Activated B cell treated with CpG ODN at 0.5 μM for 24 hours (primary cell): ENCODE measurements at regions of chr20 and their contacts with region 1.

Region 1: DNA sequence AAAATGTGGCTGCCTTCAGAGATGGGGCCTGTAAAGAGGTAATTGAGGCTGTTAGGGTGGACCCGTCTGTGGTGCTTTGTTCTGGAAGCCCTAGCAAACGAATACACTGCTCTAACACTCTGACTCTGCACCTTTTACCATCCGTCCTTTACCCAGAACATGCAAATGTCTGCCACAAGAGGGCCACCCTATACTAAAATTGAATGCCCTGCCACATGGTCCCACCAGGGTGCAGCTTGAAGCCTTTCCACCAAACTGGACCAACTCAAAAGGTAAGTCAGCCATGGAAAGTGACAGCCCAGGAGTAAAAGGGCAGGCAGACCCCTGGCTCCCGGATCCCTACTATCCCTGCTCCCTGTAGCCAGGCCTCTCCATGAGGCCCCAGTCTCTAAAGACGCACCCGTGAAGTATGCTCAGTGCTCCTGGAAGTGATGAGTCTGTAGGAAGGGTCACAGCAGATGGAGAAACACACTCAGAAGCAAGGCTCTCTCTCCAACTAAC is 5.8 kb upstream of the BFSP1 start:
- DNase-seq: peak; percentile 30
- ATAC-seq: peak; percentile 92
- H3K4me3 Mint-ChIP-seq: no peak overlapping the region
- H3K27ac Mint-ChIP-seq: no peak overlapping the region
- H3K4me1 Mint-ChIP-seq: peaks cover 5% of the 10 kb centered on the region
- H3K27me3 Mint-ChIP-seq: peaks cover 26% of the 10 kb centered on the region
- CTCF ChIP-seq: no peak

Region 2: DNA sequence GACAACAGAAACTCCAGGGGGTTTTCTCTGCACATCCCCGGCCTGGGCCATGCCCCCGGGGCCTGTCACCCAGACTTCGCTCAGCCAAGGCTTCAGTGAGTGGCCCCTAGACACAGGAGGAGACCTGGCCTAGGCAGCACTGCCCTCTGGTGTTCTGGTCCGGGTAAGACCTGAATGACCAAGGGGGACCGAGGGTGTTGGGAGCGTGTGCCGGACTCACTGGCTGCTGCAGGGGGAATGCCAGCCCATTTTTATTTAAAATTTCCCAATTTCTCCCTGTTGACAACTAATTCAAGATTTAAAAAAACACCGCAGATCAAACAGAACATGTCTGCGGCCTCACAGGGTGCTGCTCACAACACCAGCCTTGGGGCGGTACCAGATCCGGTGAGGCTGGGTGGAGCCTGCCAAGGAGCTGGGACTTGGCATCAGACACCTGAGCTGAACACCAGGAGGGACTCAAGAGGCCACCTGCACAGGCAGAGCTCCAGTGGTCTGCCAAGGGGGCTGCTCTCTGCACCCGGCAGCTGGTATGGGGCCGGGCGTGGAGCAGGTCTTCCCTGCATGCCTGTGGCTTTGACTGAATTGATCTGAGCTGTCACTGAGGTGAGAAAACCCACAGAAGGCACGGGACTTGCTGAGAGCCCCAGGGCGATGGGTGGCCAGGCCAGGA is 80.7 kb after region 1 on chr20:
- CTCF ChIA-PET with region 1: interaction called, 13 read pairs
- POLR2A ChIA-PET with region 1: no interaction called
- intact Hi-C with region 1: loop called (anchors 1 kb)
- DNase-seq: peak; percentile 20
- ATAC-seq: peak; percentile 70
- H3K4me3 Mint-ChIP-seq: no peak overlapping the region
- H3K27ac Mint-ChIP-seq: no peak overlapping the region
- H3K4me1 Mint-ChIP-seq: peaks cover 2% of the 10 kb centered on the region
- H3K27me3 Mint-ChIP-seq: no peaks in the 10 kb centered on the region
- CTCF ChIP-seq: no peak

Region 3: GRCh38 chr20:17898548-17898994 is 361.6 kb after region 1 on chr20:
- CTCF ChIA-PET with region 1: interaction called, 10 read pairs
- POLR2A ChIA-PET with region 1: no interaction called
- intact Hi-C with region 1: loop called (anchors 1 kb)
- DNase-seq: no peak
- ATAC-seq: peak; percentile 78
- H3K4me3 Mint-ChIP-seq: no peak overlapping the region
- H3K27ac Mint-ChIP-seq: no peak overlapping the region
- H3K4me1 Mint-ChIP-seq: peaks cover 53% of the 10 kb centered on the region
- H3K27me3 Mint-ChIP-seq: peaks cover 16% of the 10 kb centered on the region
- CTCF ChIP-seq: peak; percentile 93

Region 4: DNA sequence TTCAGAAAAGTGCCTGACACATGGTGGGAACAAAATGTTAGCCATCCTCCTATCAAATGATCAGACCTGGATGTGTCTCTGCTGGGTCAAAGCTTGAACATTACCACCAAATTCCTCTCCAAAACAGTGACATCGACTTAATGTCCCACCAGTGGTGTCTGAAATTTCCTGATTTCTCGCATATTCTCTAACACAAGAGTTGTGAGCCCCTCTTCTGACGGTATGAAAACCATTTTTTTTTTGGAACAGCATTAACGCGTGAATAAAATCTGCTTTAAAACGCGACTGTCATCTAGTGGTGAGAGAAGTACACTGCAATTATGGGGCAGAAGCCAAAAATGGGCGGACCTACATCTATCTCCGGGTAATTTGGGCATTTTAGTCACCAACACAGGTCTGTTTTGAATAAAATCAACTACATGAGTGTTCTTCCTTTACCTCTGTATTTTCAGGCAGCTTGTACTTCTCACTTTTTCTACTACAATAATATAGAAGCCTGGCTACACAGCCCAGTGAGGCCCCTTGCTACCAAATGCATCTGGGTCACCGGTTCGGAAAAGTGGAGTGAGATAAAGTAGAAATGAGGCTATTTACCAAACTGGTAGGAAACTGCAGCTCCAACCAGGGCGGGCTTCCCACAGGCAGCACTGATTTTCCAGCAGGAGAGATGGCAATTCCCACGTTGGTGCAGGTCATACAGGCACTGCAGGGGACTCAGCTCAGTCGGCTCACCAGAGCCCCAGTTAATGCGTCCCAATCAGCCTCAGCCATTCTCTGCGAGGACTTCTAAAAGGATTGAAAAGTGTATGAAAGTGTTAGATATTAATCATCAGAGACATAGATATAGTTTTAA is 459.2 kb after region 1 on chr20:
- CTCF ChIA-PET with region 1: interaction called, 10 read pairs
- POLR2A ChIA-PET with region 1: no interaction called
- intact Hi-C with region 1: loop called (anchors 1 kb)
- DNase-seq: no peak
- ATAC-seq: peak; percentile 91
- H3K4me3 Mint-ChIP-seq: no peak overlapping the region
- H3K27ac Mint-ChIP-seq: peak overlapping the region; percentile 20
- H3K4me1 Mint-ChIP-seq: peaks cover 29% of the 10 kb centered on the region
- H3K27me3 Mint-ChIP-seq: no peaks in the 10 kb centered on the region
- CTCF ChIP-seq: peak; percentile 89

Region 5: DNA sequence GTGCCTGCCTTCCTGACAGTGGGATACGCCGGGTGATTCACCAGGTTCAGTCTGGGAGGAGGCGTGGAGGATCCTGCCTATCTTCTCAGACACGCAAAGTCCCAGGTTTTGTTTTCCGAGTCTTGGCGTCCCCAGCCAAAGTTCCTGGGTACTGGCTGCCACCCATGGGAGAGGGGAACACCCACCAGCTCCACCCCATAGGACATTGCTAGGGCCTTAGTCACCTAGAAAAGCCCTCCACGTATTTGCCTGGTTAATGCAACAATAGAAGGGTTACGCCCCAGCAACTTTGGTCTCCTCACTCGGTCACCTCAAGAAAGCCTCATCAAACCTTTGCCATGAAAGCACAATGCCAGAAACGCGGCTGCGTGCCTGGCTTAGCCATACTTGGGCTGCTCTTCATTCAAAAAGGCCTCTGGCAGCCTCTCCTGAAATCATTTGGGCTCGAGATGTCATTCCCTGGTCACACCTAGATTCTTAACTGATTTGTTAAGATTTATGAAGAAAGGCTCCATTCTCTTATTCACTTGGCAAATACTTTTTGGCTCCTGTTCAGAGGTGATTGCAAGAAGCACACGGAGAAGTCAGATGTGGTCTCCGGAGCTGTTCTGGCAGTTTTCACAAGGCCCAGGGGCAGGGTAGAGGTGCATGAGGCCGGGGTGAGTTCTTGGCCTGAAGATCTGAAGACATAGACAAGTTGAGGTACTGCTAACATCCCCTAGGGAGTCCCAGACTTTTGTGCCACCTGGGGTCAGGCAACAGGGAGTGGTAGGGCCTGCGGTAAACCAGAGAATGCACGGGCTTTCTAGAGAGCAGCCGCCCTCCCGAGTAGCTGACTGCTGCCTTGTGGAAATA is 715.8 kb after region 1 on chr20:
- CTCF ChIA-PET with region 1: no interaction called
- POLR2A ChIA-PET with region 1: no interaction called
- intact Hi-C with region 1: no loop called
- DNase-seq: no peak
- ATAC-seq: no peak
- H3K4me3 Mint-ChIP-seq: no peak overlapping the region
- H3K27ac Mint-ChIP-seq: no peak overlapping the region
- H3K4me1 Mint-ChIP-seq: no peaks in the 10 kb centered on the region
- H3K27me3 Mint-ChIP-seq: no peaks in the 10 kb centered on the region
- CTCF ChIP-seq: no peak

Region 6: GRCh38 chr20:18276821-18277220 is 739.8 kb after region 1 on chr20:
- CTCF ChIA-PET with region 1: no interaction called
- POLR2A ChIA-PET with region 1: no interaction called
- intact Hi-C with region 1: loop called (anchors 1 kb)
- DNase-seq: peak; percentile 21
- ATAC-seq: peak; percentile 66
- H3K4me3 Mint-ChIP-seq: no peak overlapping the region
- H3K27ac Mint-ChIP-seq: no peak overlapping the region
- H3K4me1 Mint-ChIP-seq: no peaks in the 10 kb centered on the region
- H3K27me3 Mint-ChIP-seq: peaks cover 37% of the 10 kb centered on the region
- CTCF ChIP-seq: no peak